AG04449 (cell line): ENCODE measurements at regions of chr10 and their contacts with region 1.

Region 1: GRCh38 chr10:17228091-17228940 is at the start of gene VIM:
- DNase-seq: no peak
- H3K4me3 ChIP-seq: peak within 1 kb of the TSS; percentile 95
- CTCF ChIP-seq: peak; percentile 24

Region 2: DNA sequence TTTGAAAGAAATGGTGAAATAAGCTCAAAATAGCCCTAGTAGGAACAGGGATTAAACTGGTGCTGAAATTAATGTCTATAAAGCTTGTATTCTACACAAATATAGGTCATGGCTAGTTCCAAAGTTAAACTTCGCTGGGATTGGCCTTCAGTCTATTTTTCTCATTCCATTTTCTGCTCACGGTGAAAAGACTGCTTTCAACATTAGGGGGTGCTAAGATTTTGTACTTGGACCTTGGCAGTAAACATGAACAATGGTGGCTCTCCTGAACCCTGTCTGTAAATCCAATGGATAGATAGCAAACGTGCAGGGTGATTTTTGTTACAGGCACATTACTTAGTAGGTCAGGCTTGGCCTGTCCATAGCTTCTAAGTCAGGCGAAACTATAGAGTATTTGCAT is 375.1 kb before region 1 on chr10:
- CTCF ChIA-PET with region 1: interaction called, 7 read pairs
- POLR2A ChIA-PET with region 1: interaction called, 19 read pairs
- DNase-seq: no peak
- H3K4me3 ChIP-seq: no peak overlapping the region
- CTCF ChIP-seq: peak; percentile 53

Region 3: DNA sequence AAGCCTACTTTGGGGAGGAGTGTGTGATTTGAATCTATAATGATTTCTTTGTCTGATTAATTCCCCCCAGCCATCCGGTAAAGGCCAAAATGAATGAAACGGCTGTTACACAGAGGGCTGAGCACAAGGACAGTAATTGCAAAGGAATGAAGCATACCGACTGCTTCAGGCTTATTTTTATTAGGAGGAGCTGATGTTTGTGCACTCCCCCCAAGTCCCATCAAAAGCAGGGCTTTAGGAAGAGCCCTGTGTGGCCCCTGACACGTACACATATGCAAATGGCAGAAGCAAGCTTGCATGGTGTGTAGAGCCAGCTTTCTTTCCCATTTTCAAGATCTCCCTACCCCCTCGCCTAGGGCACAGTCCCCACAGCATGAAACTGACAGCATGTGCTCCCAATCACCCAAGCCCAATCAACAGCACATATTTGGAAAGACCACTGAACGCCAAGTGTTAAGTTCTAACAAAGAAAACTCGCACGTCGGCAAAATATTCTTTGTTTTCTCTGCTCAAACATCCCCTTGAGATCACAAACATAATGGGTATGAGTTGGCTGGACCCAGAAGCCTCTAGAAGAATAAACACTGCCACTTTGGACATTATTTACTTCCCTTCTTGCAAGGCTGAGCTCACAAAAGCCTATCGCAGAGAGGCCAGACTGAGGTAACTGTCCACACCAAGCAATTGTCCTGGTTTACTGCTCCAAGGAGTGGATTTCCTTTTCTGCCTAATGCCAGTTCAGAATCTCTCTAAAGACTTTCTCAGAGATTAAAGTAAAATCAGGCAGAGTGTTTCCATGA is 241.7 kb before region 1 on chr10:
- CTCF ChIA-PET with region 1: interaction called, 3 read pairs
- POLR2A ChIA-PET with region 1: interaction called, 29 read pairs
- DNase-seq: peak; percentile 83
- H3K4me3 ChIP-seq: no peak overlapping the region
- CTCF ChIP-seq: no peak

Region 4: DNA sequence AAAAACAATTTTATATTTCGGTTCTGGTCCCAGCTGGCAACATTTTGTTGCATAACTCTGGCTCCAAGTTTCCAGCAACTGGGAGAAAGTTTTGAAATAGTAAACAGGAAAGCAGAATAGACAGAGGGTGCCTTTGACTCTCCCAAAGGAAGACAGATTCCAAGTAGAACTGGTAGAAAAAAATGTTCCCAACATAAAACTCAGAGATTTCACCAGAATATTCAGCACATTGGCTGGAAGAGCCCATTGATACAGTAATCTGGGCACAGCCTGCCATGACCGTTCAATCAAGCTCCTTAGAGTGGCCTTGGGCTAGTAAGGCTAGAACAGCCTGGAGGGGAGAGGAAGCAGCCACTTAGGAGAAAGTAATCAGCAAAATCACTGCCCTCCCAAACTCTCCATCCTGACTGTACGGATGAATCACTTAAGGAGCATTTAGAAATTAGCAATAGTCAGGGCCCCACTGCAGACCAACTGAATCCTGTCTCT is 219.1 kb before region 1 on chr10:
- CTCF ChIA-PET with region 1: no interaction called
- POLR2A ChIA-PET with region 1: interaction called, 13 read pairs
- DNase-seq: no peak
- H3K4me3 ChIP-seq: no peak overlapping the region
- CTCF ChIP-seq: no peak

Region 5: GRCh38 chr10:17062955-17063484 is 165.3 kb before region 1 on chr10:
- CTCF ChIA-PET with region 1: interaction called, 4 read pairs
- POLR2A ChIA-PET with region 1: interaction called, 17 read pairs
- DNase-seq: peak; percentile 33
- H3K4me3 ChIP-seq: no peak overlapping the region; the same call in 1 of the 2 replicates
- CTCF ChIP-seq: no peak

Region 6: DNA sequence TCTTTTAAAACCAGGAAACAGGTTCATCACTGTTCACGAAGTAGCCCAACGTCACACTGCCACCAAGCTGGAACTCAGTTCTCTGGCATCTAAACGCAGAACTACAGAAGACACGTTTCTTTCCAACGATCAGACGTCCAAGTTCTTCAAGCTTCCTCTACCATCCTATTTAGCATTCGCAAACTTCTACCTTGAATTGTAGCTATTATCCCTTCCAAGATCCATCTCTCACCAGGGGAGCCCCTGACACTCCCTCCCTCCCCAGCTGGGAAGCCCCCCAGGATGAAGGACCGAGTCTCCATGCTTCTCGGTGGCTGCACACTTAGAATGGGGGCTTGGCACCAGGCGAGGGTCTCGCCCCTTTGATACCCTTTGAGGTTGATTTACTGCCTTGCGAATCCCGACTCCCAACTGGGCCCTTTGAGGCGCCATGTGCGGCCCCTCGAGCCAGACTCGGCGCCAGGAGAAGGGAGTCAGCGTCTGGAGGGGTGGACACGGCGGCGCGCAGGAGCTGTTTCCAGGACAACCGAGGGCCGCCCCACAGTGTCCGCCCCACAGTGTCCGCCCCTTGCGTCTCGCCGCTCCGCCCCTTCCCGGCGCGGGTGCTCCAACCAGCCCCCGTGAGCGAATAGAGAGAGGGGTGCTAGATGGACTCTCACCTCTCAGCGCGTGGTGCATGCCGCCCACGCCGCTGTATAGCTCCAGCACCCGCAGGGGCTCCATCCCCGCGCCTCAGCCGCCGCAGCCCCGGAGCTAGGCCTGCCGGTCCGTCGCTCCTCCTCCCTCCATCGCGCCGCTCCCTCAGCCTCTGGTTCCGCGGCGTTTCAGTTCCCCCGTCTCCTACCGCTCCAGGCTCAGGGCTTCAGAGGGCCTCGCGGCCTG is 27.2 kb before region 1 on chr10 and contains the start of gene TRDMT1:
- CTCF ChIA-PET with region 1: interaction called, 3 read pairs
- POLR2A ChIA-PET with region 1: interaction called, 54 read pairs
- DNase-seq: no peak
- H3K4me3 ChIP-seq: peak within 1 kb of the TSS; percentile 69
- CTCF ChIP-seq: no peak

Region 7: DNA sequence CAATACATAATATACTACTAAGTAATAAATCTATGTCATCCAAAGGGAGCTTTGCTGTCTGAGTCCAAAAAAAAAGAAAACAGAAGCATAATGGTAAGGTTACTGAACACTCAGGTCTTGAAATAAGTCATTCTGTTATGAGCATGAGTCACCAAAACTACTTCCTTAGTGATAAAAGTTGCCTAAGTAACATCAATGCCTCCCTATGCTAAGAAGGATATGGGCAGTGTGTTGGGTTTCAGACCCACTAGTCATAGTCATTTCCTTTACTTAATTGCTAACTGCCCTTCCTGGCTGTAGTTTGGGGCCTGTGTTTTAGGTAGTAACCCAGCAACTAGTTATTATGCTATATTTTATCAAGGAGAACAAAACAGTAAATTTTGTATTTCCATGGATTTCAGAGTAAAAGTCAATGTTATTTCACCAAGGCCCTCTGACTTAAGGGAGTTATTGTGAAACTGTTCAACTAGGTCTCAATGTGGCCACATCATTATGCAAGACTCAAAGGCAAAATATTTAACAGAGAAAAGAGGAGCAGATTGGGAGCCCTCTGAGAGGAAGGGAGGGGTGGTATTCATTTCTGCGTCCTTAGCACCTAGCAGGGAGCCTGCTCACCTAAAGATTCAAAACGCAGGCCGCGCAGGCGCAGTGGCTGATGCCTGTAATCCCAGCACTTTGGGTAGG is 12.0 kb before region 1 on chr10:
- CTCF ChIA-PET with region 1: interaction called, 10 read pairs
- POLR2A ChIA-PET with region 1: interaction called, 51 read pairs
- DNase-seq: peak; percentile 97
- H3K4me3 ChIP-seq: no peak overlapping the region
- CTCF ChIP-seq: no peak